ENCODE measurements at regions of chr18 and their contacts with region 1.

Region 1: GRCh38 chr18:59070181-59070912 is 69.3 kb upstream of the SEC11C start:
- DNase-seq: peak; percentile 91
- ATAC-seq: peak; percentile 67
- H3K4me3 ChIP-seq: no peak overlapping the region
- H3K27ac ChIP-seq: no peak overlapping the region
- H3K4me1 ChIP-seq: peaks cover 27% of the 10 kb centered on the region
- H3K27me3 ChIP-seq: no peaks in the 10 kb centered on the region
- CTCF ChIP-seq: peak; percentile 94

Region 2: DNA sequence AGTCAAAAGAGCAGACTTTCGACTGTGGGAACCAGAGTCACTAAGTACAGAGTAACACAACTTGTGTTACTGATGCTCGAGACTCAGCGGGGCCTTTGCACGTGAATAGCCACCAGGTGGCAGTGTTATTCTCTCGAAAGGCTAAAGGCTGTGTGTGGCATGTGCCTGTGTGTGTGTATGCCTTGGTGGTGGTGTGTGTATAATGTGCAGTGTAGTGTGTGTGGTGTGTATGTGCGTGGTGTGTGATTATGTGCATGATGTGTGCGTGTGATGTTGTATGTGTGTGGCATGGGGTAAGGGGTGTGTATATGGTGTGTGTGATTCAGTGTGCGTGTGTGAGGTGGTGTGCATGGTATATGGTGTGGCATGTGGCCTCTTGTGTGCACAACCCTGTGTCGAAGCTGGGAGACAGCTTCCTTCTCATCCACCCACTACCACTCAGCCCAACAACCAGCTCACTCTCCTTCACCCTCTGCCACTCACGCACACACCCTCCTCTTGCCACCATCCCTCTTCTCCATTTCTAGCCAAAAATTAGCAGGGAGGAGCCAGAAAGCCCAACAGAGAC is 288.6 kb before region 1 on chr18:
- CTCF ChIA-PET with region 1: interaction called, 8 read pairs
- POLR2A ChIA-PET with region 1: no interaction called
- intact Hi-C with region 1: loop called (anchors 1 kb)
- DNase-seq: peak; percentile 90
- ATAC-seq: peak; percentile 32
- H3K4me3 ChIP-seq: no peak overlapping the region
- H3K27ac ChIP-seq: peak overlapping the region; percentile 44
- H3K4me1 ChIP-seq: peaks cover 28% of the 10 kb centered on the region
- H3K27me3 ChIP-seq: no peaks in the 10 kb centered on the region
- CTCF ChIP-seq: peak; percentile 96

Region 3: GRCh38 chr18:58887613-58887963 is 182.8 kb before region 1 on chr18:
- CTCF ChIA-PET with region 1: no interaction called
- POLR2A ChIA-PET with region 1: no interaction called
- intact Hi-C with region 1: loop called (anchors 5 kb)
- DNase-seq: peak; percentile 84
- ATAC-seq: peak; percentile 98
- H3K4me3 ChIP-seq: peak overlapping the region; percentile 18; the same call in 1 of the 2 replicates
- H3K27ac ChIP-seq: peak overlapping the region; percentile 72
- H3K4me1 ChIP-seq: peaks cover 31% of the 10 kb centered on the region
- H3K27me3 ChIP-seq: no peaks in the 10 kb centered on the region
- CTCF ChIP-seq: no peak

Region 4: GRCh38 chr18:58991167-58991798 is 79.1 kb before region 1 on chr18:
- CTCF ChIA-PET with region 1: interaction called, 3 read pairs
- POLR2A ChIA-PET with region 1: no interaction called
- intact Hi-C with region 1: loop called (anchors 1 kb)
- DNase-seq: peak; percentile 65
- ATAC-seq: peak; percentile 68
- H3K4me3 ChIP-seq: peak overlapping the region; percentile 22; the same call in 1 of the 2 replicates
- H3K27ac ChIP-seq: peak overlapping the region; percentile 92
- H3K4me1 ChIP-seq: peaks cover 43% of the 10 kb centered on the region
- H3K27me3 ChIP-seq: no peaks in the 10 kb centered on the region
- CTCF ChIP-seq: no peak; the same call in 1 of the 2 replicates

Region 5: GRCh38 chr18:59899298-59900221 is 829.2 kb after region 1 on chr18 and contains the start of gene PMAIP1:
- CTCF ChIA-PET with region 1: no interaction called
- POLR2A ChIA-PET with region 1: no interaction called
- intact Hi-C with region 1: no loop called
- DNase-seq: peak; percentile 94
- ATAC-seq: peak; percentile 71
- H3K4me3 ChIP-seq: peak within 1 kb of the TSS; percentile 83
- H3K27ac ChIP-seq: peak within 1 kb of the TSS; percentile 94
- H3K4me1 ChIP-seq: peaks cover 47% of the 10 kb centered on the region
- H3K27me3 ChIP-seq: no peaks in the 10 kb centered on the region
- CTCF ChIP-seq: no peak
- total RNA-seq, gene PMAIP1: 39.2 and 41.5 TPM in 2 replicates

Measured in PC-3 (cell line).